ENCODE measurements at regions of chr1 and their contacts with region 1.

Region 1: GRCh38 chr1:231357831-231358354 is 19.8 kb downstream of the SPRTN start:
- DNase-seq: peak in 6 of 9 experiments; percentile 27 to 72 (median 45)
- ATAC-seq: peak; percentile 88
- H3K4me3 ChIP-seq: no peak overlapping the region
- H3K4me3 Mint-ChIP-seq: no peak overlapping the region
- H3K27ac ChIP-seq: no peak overlapping the region
- H3K27ac Mint-ChIP-seq: peak overlapping the region; percentile 9
- H3K4me1 ChIP-seq: no peaks in the 10 kb centered on the region
- H3K4me1 Mint-ChIP-seq: peaks cover 6% of the 10 kb centered on the region
- H3K27me3 ChIP-seq: no peaks in the 10 kb centered on the region
- H3K27me3 Mint-ChIP-seq: no peaks in the 10 kb centered on the region
- CTCF ChIP-seq: peak; percentile 71

Region 2: GRCh38 chr1:231410036-231410612 is 52.2 kb after region 1 on chr1:
- CTCF ChIA-PET with region 1: no interaction called
- POLR2A ChIA-PET with region 1: no interaction called
- intact Hi-C with region 1: no loop called
- DNase-seq: no peak
- ATAC-seq: no peak
- H3K4me3 ChIP-seq: no peak overlapping the region
- H3K4me3 Mint-ChIP-seq: no peak overlapping the region
- H3K27ac ChIP-seq: no peak overlapping the region
- H3K27ac Mint-ChIP-seq: no peak overlapping the region
- H3K4me1 ChIP-seq: peaks cover 41% of the 10 kb centered on the region
- H3K4me1 Mint-ChIP-seq: peaks cover 42% of the 10 kb centered on the region
- H3K27me3 ChIP-seq: no peaks in the 10 kb centered on the region
- H3K27me3 Mint-ChIP-seq: no peaks in the 10 kb centered on the region
- CTCF ChIP-seq: no peak

Region 3: DNA sequence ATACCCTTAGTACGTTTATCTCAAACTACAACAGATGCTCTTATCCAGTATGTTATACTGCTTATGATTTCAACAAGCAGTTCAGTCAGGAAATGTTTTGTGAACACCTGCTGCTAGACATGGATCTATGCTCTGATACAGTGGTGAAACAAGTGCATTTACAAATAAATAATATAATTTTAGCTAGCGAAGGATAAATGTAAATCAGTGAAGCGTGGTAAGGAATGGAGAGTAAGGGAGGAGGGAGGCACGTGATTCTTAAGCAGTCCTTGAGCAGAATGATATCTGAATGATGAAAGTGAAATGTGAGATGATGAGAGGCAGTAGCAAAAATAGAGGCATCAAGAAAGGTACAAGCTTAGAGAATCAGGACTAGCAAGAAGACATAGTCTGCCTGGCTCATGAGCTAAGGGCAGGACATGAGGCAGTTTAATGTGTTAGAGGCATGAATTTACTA is 176.8 kb after region 1 on chr1:
- CTCF ChIA-PET with region 1: interaction called, 5 read pairs
- POLR2A ChIA-PET with region 1: no interaction called
- intact Hi-C with region 1: loop called in 1 of 2 experiments (anchors 5 kb)
- DNase-seq: no peak
- ATAC-seq: no peak
- H3K4me3 ChIP-seq: no peak overlapping the region
- H3K4me3 Mint-ChIP-seq: no peak overlapping the region
- H3K27ac ChIP-seq: no peak overlapping the region
- H3K27ac Mint-ChIP-seq: no peak overlapping the region
- H3K4me1 ChIP-seq: peaks cover 36% of the 10 kb centered on the region
- H3K4me1 Mint-ChIP-seq: peaks cover 46% of the 10 kb centered on the region
- H3K27me3 ChIP-seq: no peaks in the 10 kb centered on the region
- H3K27me3 Mint-ChIP-seq: no peaks in the 10 kb centered on the region
- CTCF ChIP-seq: no peak

Region 4: DNA sequence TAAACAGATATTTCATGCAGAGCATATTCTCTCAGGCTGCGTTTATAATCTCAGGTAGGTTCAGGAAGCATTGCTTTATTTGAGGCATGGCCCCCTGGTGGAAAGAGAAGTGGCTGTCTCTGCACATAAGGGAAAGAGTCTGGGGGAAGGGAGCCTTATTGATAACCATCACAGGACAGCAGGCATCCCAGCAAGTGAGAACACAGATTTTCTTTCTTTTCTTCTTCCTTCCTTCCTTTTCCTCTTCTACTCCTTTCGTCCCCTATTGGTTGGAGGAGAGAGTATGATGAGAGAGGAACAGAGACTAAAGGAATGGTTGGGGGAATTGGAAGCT is 192.5 kb after region 1 on chr1:
- CTCF ChIA-PET with region 1: interaction called, 10 read pairs
- POLR2A ChIA-PET with region 1: no interaction called
- intact Hi-C with region 1: loop called (anchors 1 kb)
- DNase-seq: peak in 5 of 9 experiments; percentile 15 to 54 (median 38)
- ATAC-seq: peak; percentile 57
- H3K4me3 ChIP-seq: no peak overlapping the region
- H3K4me3 Mint-ChIP-seq: no peak overlapping the region
- H3K27ac ChIP-seq: no peak overlapping the region
- H3K27ac Mint-ChIP-seq: peak overlapping the region; percentile 60
- H3K4me1 ChIP-seq: no peaks in the 10 kb centered on the region
- H3K4me1 Mint-ChIP-seq: peaks cover 31% of the 10 kb centered on the region
- H3K27me3 ChIP-seq: no peaks in the 10 kb centered on the region
- H3K27me3 Mint-ChIP-seq: no peaks in the 10 kb centered on the region
- CTCF ChIP-seq: peak; percentile 45

Region 5: DNA sequence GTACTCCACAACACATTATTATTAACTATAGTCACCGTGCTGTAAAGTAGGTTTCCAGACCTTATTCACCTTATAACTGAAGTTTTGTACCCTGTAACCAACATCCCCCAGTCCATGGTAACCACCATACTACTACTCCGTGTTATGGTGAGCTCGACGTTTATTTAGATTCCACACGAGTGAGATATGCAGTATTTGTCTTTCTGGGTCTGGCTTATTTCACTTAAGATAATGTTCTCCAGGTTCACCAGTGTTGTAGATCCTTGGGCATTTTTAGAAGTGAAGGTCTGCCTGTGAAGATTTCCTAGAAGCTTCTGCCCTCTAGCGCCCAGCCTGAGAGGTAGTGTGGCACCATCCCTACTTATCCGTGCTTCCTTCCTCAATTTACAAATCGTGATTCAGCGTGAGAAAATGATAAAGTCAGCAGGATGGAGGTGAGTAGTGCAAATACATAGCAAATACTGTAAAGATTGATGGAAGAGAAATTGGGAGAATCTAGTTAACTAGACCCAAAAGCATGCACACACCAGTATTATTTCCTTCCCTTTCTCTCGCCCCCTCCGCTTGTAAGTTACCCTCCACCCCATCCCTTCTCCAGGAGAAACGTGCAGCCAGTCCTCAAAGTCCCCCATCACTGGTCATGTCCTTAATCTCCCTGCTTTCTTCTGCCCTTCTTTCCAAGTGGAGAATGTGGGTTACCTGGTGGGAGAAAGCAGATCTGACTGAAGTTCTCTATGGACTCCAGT is 232.7 kb after region 1 on chr1:
- CTCF ChIA-PET with region 1: interaction called, 18 read pairs
- POLR2A ChIA-PET with region 1: no interaction called
- intact Hi-C with region 1: loop called (anchors 1 kb)
- DNase-seq: peak in 5 of 9 experiments; percentile 29 to 63 (median 38)
- ATAC-seq: peak; percentile 42
- H3K4me3 ChIP-seq: no peak overlapping the region
- H3K4me3 Mint-ChIP-seq: no peak overlapping the region
- H3K27ac ChIP-seq: no peak overlapping the region
- H3K27ac Mint-ChIP-seq: no peak overlapping the region
- H3K4me1 ChIP-seq: no peaks in the 10 kb centered on the region
- H3K4me1 Mint-ChIP-seq: peaks cover 4% of the 10 kb centered on the region
- H3K27me3 ChIP-seq: no peaks in the 10 kb centered on the region
- H3K27me3 Mint-ChIP-seq: no peaks in the 10 kb centered on the region
- CTCF ChIP-seq: peak; percentile 47

Region 6: DNA sequence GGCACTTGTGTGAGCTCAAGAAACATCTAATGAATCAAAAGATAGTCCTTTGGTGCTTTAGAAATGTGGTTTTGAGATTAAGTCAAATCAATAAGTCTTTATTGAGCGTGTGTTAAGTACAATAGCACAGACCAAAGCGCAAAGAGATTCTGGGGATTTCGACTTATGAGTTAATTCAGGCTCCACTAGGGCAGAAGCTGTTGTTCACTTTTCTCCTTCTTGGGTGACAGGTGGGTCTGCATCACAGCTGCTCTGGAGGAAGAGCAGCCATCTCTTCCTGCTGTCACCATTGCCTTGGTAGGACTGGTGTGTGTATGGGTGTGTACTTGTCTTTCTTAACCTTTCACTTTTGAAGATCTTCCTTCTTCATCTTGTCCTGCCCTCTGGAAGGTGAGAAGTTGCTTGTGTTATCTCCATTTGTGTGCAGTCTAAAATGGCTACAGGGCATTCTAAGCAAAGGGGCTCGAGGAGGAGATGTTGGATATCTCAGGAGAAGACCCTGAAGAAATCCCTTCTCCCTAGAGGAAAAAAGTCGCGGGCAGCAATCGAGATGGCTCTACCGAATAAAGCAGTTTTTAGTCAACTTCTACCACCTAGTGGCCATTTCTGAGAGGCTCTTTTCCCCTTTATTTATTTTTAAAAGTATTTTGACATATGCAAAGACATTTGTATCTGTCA is 245.8 kb after region 1 on chr1:
- CTCF ChIA-PET with region 1: interaction called, 65 read pairs
- POLR2A ChIA-PET with region 1: no interaction called
- intact Hi-C with region 1: loop called (anchors 1 kb)
- DNase-seq: peak in 7 of 9 experiments; percentile 6 to 73 (median 36)
- ATAC-seq: peak; percentile 89
- H3K4me3 ChIP-seq: peak overlapping the region; percentile 62 to 74
- H3K4me3 Mint-ChIP-seq: peak overlapping the region; percentile 95
- H3K27ac ChIP-seq: peak overlapping the region; percentile 21 to 40
- H3K27ac Mint-ChIP-seq: peak overlapping the region; percentile 89
- H3K4me1 ChIP-seq: peaks cover 4% of the 10 kb centered on the region
- H3K4me1 Mint-ChIP-seq: peaks cover 8% of the 10 kb centered on the region
- H3K27me3 ChIP-seq: no peaks in the 10 kb centered on the region
- H3K27me3 Mint-ChIP-seq: no peaks in the 10 kb centered on the region
- CTCF ChIP-seq: peak; percentile 74

Region 7: DNA sequence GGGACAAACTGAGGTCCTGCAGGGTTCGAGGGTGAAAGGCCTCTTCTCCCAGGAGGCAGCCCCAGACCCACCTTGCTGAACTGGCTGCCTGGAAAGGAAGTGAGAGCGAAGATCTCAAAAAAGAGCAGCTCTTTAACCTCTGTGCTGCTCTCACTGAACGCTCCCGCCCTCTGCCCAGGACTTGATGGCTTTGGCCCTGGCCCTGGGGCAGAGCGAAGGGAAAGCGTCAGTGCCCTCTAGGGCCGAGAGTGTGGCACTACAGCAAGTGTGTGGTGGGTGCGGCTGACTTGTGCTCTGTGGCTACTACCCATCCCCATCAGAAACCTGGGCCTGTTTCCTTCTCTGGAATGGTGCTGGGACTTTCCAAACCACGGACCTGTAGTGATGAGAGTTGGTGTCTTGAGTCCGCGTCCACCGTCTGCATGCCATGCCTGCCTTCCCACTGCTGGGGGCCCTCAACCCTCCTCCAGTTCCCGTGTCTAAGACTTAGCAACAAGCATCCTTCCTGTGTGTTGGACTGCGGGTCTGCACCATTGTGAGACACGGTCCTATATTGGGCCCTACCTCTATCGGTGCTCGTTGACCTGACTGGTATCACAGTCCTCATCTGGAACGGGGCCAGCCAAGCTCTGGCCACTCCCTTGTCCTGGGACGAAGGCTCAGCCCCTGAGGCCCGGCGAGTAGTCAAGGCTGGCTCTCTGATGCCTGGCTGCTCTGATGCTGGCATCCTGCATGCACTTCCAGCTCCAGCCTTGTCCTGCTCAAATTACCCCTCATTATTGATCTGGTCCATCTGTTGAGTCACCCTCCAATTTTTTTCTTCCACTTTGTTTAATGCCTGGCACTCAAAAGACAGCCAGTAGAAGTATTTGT is 449.0 kb after region 1 on chr1:
- CTCF ChIA-PET with region 1: no interaction called
- POLR2A ChIA-PET with region 1: no interaction called
- intact Hi-C with region 1: loop called in 1 of 2 experiments (anchors 2 kb)
- DNase-seq: peak in 2 of 9 experiments; percentile 20 to 32
- ATAC-seq: no peak
- H3K4me3 ChIP-seq: no peak overlapping the region
- H3K4me3 Mint-ChIP-seq: no peak overlapping the region
- H3K27ac ChIP-seq: no peak overlapping the region
- H3K27ac Mint-ChIP-seq: no peak overlapping the region
- H3K4me1 ChIP-seq: no peaks in the 10 kb centered on the region
- H3K4me1 Mint-ChIP-seq: no peaks in the 10 kb centered on the region
- H3K27me3 ChIP-seq: no peaks in the 10 kb centered on the region
- H3K27me3 Mint-ChIP-seq: no peaks in the 10 kb centered on the region
- CTCF ChIP-seq: peak; percentile 29